ENCODE measurements at regions of chr9 and their contacts with region 1.

Region 1: GRCh38 chr9:132800038-132800648 is 77.9 kb downstream of the AK8 start:
- DNase-seq: peak in 1 of 2 donors; percentile 73
- H3K4me3 ChIP-seq: no peak overlapping the region
- H3K27ac ChIP-seq: no peak overlapping the region
- H3K4me1 ChIP-seq: no peaks in the 10 kb centered on the region
- H3K27me3 ChIP-seq: no peaks in the 10 kb centered on the region
- CTCF ChIP-seq: peak; percentile 62 to 86 (median 83)

Region 2: DNA sequence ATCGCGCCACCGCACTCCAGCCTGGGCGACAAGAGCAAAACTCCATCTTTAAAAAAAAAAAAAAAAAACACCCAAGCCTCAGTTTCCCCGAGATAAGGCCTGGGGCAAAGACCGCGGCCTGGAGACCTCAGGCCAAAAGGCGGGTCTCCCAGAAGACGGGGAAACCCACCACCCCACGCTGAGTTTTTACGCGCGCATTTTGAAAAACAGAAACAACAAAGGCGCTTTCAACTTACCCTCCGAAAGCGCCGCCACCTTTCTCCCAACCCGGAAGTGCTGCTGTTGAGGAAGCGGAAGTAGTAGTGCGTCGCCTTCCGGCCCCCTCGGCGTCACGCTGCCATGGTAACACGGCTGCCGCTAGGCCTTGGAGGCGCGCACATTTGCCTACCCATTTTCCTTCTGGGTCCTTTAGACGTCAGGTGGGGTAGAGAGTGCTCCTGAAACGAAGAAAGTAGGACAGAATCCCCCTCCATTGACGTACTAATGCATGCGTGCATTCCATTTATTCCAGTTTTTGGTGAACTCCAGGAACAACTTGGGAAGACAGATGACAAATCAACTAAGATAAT is 393.5 kb before region 1 on chr9 and contains the start of gene TTF1:
- intact Hi-C with region 1: loop called (anchors 2 kb)
- DNase-seq: peak; percentile 38 to 94
- H3K4me3 ChIP-seq: peak within 1 kb of the TSS; percentile 69 to 90
- H3K27ac ChIP-seq: peak within 1 kb of the TSS in 1 of 2 donors; percentile 10
- H3K4me1 ChIP-seq: peaks cover 14 to 20% of the 10 kb centered on the region in 2 donors
- H3K27me3 ChIP-seq: no peaks in the 10 kb centered on the region
- CTCF ChIP-seq: no peak
- total RNA-seq, gene TTF1: 2.3 TPM

Region 3: DNA sequence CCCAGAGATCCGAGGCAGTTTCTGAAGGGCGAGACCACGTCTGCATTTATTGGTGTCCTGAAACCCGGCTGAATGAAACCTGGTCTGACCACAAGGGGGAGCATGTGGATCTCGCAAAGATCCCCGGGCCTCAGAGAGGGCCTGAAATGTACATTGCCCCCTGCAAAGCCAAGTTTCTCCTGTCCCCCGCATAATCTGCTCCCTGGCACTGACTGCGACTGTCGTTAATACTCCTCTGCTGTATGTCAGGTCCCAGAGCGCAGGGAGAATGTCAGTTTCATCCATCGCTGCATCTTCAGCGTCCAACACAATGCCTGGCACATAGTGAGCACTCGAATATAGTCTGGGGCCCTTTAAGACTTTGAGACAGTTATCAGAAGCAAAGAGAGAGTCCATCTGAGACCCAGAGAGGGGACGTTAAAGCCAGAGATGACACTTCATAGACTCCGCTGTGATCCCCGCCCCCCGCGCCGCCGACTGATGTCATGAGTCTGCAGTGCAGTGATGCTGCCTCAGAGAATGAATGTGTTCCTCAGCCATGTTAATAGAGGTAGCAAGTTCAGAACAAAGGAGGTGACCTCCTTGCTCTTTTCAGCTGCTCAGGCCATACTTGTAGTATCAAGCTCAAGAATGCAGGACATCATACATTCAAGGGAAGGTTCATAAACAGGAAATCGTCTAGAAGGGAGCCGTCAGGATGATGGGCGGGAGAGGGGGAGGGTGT is 292.2 kb before region 1 on chr9:
- intact Hi-C with region 1: loop called (anchors 5 kb)
- DNase-seq: peak in 1 of 2 donors; percentile 76
- H3K4me3 ChIP-seq: no peak overlapping the region
- H3K27ac ChIP-seq: no peak overlapping the region
- H3K4me1 ChIP-seq: no peaks in the 10 kb centered on the region
- H3K27me3 ChIP-seq: no peaks in the 10 kb centered on the region
- CTCF ChIP-seq: peak; percentile 51 to 64 (median 56)